Activated T-helper 1 cell treated with anti-CD3 and anti-CD28 coated beads, Interleukin-12 subunit alpha, Interleukin-12 subunit beta, Interleukin-2, Interleukin-4 antibody, amounts not matched to agents 30 ng/mL and 10 ng/mL and 1 ng/mL, durations not matched to agents 14 hours and 24 hours and 36 hours (primary cell): ENCODE measurements at regions of chr13 and their contacts with region 1.

Region 1: DNA sequence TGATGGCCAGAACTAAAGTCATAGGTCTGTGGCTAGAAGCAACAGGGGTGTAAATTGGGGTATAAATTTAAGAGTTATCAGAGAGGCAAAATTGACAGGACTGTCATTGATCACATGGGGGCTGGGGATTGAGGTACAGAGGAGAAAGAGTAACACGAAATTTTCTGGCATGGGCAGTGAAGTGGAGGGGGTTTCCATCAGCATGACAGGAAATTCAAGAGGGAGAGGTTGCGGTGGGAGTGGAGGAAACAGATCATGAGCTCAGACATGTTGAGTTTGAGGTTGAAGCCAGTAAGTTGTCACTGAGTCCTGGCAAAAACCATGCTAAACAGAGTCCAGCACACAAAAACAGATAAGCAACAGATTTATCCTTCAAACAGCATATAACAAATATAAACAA is 192.1 kb upstream of the TSC22D1 start:
- DNase-seq: peak; percentile 63
- H3K4me3 Mint-ChIP-seq: peak overlapping the region; percentile 41
- H3K27ac Mint-ChIP-seq: peak overlapping the region; percentile 82
- H3K4me1 Mint-ChIP-seq: peaks cover 56% of the 10 kb centered on the region
- H3K27me3 Mint-ChIP-seq: no peaks in the 10 kb centered on the region

Region 2: GRCh38 chr13:44474122-44474909 is 293.9 kb before region 1 on chr13:
- intact Hi-C with region 1: no loop called
- DNase-seq: no peak
- H3K4me3 Mint-ChIP-seq: no peak overlapping the region
- H3K27ac Mint-ChIP-seq: no peak overlapping the region
- H3K4me1 Mint-ChIP-seq: no peaks in the 10 kb centered on the region
- H3K27me3 Mint-ChIP-seq: peaks cover 8% of the 10 kb centered on the region

Region 3: GRCh38 chr13:44710576-44710975 is 57.7 kb before region 1 on chr13:
- intact Hi-C with region 1: loop called (anchors 1 kb)
- DNase-seq: no peak
- H3K4me3 Mint-ChIP-seq: no peak overlapping the region
- H3K27ac Mint-ChIP-seq: no peak overlapping the region
- H3K4me1 Mint-ChIP-seq: peaks cover 18% of the 10 kb centered on the region
- H3K27me3 Mint-ChIP-seq: peaks cover 26% of the 10 kb centered on the region

Region 4: DNA sequence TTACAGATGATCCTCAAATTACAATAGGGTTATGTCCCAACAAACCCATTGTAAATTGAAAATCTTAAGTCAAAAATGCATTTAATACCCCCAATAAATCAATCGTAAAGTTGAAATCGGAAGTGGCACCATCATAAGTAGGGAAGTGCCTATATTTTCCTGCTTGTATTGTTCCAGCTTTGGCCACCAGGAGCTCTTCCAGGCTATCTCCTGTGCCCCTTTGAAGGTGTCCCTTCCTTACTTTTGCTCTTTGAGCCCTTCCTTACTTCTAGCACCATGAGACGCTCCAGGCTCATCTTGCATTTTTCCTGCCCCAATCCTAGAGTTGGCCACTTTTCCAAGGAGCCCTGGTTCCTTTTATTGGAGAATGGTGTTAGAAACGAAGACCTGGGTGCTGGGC is 29.1 kb before region 1 on chr13:
- intact Hi-C with region 1: no loop called
- DNase-seq: no peak
- H3K4me3 Mint-ChIP-seq: no peak overlapping the region
- H3K27ac Mint-ChIP-seq: no peak overlapping the region
- H3K4me1 Mint-ChIP-seq: no peaks in the 10 kb centered on the region
- H3K27me3 Mint-ChIP-seq: peaks cover 8% of the 10 kb centered on the region

Region 5: GRCh38 chr13:44879463-44880058 is 111.3 kb after region 1 on chr13:
- intact Hi-C with region 1: loop called (anchors 5 kb)
- DNase-seq: no peak
- H3K4me3 Mint-ChIP-seq: no peak overlapping the region
- H3K27ac Mint-ChIP-seq: no peak overlapping the region
- H3K4me1 Mint-ChIP-seq: peaks cover 11% of the 10 kb centered on the region
- H3K27me3 Mint-ChIP-seq: no peaks in the 10 kb centered on the region